PC-3 (cell line): ENCODE measurements at regions of chrX and their contacts with region 1.

Region 1: DNA sequence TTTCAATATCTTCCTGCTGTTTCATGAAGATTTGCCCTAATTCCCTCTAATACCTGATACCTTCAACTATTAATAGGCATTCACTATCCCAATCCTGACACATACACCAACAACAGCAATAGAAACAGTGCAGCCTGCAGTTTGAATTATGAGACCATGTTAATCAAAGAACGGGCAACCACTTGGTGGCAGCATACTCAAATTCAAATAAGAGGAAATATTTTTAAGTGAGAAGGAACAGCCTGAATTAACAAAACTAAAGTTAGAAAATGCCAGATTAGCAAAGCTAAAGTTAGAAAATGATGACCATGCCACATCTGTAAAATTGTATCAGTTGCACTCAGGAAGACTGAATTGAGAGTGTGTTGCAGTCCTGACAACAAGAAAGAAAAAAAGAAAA is 204.9 kb downstream of the SMARCA1 start:
- DNase-seq: peak; percentile 37
- ATAC-seq: no peak
- H3K4me3 ChIP-seq: no peak overlapping the region
- H3K27ac ChIP-seq: no peak overlapping the region
- H3K4me1 ChIP-seq: no peaks in the 10 kb centered on the region
- H3K27me3 ChIP-seq: no peaks in the 10 kb centered on the region
- CTCF ChIP-seq: peak; percentile 58

Region 2: GRCh38 chrX:129125122-129125914 is 193.1 kb before region 1 on chrX:
- CTCF ChIA-PET with region 1: no interaction called
- POLR2A ChIA-PET with region 1: no interaction called
- intact Hi-C with region 1: no loop called
- DNase-seq: no peak
- ATAC-seq: no peak
- H3K4me3 ChIP-seq: no peak overlapping the region
- H3K27ac ChIP-seq: no peak overlapping the region
- H3K4me1 ChIP-seq: no peaks in the 10 kb centered on the region
- H3K27me3 ChIP-seq: no peaks in the 10 kb centered on the region
- CTCF ChIP-seq: no peak

Region 3: DNA sequence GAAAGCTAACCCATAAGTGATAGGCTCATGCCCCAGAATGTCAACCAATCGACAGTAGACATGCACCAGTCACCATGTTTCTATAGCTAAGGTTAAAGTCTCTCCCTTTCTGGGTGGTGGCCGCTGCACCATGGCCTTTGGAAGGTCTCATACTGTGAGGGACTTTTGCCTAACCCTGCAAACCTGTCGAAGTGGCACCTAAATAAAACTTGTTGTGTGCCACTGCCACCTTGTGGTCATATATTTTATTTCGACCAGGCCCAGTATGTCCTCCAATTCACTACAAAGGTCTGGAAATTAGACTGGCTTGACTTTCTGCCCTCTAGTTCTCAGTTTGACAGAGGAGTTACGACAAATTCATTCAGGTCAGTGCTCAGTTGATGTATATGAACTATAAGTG is 41.8 kb after region 1 on chrX:
- CTCF ChIA-PET with region 1: no interaction called
- POLR2A ChIA-PET with region 1: no interaction called
- intact Hi-C with region 1: loop called (anchors 1 kb)
- DNase-seq: peak; percentile 74
- ATAC-seq: peak; percentile 82
- H3K4me3 ChIP-seq: no peak overlapping the region
- H3K27ac ChIP-seq: no peak overlapping the region
- H3K4me1 ChIP-seq: no peaks in the 10 kb centered on the region
- H3K27me3 ChIP-seq: no peaks in the 10 kb centered on the region
- CTCF ChIP-seq: peak; percentile 69

Region 4: GRCh38 chrX:129462707-129463106 is 144.3 kb after region 1 on chrX:
- CTCF ChIA-PET with region 1: no interaction called
- POLR2A ChIA-PET with region 1: no interaction called
- intact Hi-C with region 1: loop called (anchors 5 kb)
- DNase-seq: peak; percentile 7
- ATAC-seq: no peak
- H3K4me3 ChIP-seq: no peak overlapping the region
- H3K27ac ChIP-seq: no peak overlapping the region
- H3K4me1 ChIP-seq: no peaks in the 10 kb centered on the region
- H3K27me3 ChIP-seq: no peaks in the 10 kb centered on the region
- CTCF ChIP-seq: peak; percentile 46